Common myeloid progenitor, CD34-positive (primary cell): ENCODE measurements at regions of chr16 and their contacts with region 1.

Region 1: DNA sequence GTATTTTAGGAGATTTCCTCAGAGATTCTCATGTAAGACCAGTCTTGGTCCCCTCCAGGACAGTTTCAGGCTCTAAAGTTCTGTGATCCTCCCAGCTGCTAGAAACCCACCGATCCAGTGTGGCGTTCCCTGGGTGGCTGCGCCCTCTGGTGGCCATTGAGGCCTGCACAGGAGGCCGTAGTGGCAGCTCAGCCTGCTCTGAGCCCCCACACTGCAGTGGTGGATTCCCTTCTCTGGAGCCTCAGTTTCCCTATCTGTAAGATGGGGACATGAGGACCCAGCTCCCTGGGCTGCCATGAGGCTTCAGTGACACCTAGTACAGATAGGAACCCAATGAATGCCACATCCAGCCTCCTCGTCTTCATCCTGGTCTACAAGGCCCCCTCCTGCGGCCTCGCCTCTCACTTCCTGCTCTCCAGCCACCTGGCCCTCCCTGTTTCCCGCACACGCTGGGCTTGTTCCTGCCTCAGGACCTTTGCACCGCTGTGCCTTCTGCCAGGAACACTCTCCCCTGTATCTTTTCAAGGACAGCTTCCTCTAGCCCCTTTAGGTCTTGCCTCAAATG is 16.5 kb downstream of the CCDC102A start:
- DNase-seq: peak; percentile 72 to 85 (median 83)
- H3K4me3 ChIP-seq: no peak overlapping the region
- H3K27ac ChIP-seq: no peak overlapping the region
- H3K4me1 ChIP-seq: peaks cover 0 to 9% (median 7%) of the 10 kb centered on the region in 4 experiments
- H3K27me3 ChIP-seq: no peaks in the 10 kb centered on the region

Region 2: DNA sequence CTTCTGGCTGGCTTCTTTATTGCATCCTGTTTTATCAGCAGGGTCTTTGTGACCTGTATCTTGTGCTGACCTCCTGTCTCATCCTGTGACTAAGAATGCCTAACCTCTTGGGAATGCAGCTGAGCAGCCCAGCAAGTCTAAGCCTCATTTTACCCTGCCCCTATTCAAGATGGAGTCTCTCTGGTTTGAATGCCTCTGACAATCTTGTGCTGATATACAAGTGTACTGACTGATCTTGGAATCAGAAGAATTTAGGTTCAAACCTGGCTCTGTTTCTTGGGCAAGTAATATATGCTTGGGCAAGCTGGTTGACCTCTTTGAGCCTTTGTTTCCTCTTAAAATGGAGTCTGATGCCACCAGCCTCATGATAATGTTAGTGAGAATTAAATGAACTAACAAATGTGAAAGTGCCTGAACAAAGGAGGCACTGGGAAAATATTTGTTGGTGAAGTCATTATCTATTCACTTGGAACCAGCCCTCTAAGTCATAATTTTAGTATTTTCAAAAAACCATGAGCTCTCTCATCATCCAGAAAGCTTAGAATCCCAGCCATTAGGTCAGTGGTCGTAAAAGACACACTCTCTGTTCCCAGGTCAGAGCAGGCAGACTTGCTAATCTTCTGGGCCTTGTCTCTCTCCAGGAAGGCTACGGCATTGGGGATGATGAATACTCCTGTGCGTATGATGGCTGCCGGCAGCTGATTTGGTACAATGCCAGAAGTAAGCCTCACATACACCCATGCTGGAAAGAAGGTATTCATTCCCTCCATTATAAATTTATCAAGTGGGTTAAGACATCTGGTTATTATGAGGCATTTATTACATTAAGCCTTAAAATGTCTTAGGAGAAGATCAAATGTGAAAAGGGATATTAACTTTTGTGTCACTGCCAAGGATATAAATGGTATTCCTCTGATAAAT is 292.9 kb before region 1 on chr16:
- CTCF ChIA-PET with region 1: no interaction called
- POLR2A ChIA-PET with region 1: no interaction called
- DNase-seq: no peak
- H3K4me3 ChIP-seq: no peak overlapping the region
- H3K27ac ChIP-seq: peak overlapping the region in 1 of 2 experiments; percentile 0
- H3K4me1 ChIP-seq: no peaks in the 10 kb centered on the region
- H3K27me3 ChIP-seq: no peaks in the 10 kb centered on the region

Region 3: DNA sequence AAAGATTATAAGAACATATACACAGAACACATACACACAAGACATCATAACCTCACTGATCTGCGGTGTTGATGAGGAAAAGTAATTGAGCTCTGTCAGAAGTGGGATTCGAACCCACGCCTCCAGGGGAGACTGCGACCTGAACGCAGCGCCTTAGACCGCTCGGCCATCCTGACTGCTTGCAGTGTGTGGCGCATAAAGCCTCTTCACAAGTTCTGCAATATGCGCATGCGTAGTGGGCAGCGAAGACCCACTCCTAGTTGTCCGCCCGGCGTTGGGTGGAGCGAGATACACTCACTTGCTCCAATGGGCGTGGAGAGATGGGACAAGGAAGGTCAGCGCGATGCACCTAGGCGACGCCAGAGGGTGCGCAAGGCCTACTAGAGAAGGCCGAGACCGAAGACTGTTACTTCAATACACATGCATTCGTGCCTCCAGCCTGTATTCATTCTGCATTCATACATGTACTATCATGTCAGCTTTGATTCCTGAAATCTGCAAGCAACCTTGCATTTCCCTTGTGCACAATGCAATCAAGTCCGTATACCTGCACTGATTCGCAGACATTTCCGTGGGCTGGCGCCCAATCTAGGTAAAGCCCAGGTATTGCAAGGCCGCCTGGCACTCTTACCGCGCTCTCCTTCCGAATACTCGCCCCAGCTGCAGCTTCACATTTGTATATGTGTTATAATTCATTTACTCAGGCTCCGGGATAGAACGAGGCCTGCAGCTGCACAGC is 219.3 kb before region 1 on chr16:
- CTCF ChIA-PET with region 1: interaction called, 11 read pairs
- POLR2A ChIA-PET with region 1: no interaction called
- DNase-seq: peak; percentile 99 to 100 (median 99)
- H3K4me3 ChIP-seq: peak overlapping the region in 6 of 7 experiments; percentile 72 to 85 (median 80)
- H3K27ac ChIP-seq: peak overlapping the region in 1 of 2 experiments; percentile 81
- H3K4me1 ChIP-seq: peaks cover 3 to 20% (median 16%) of the 10 kb centered on the region in 4 experiments
- H3K27me3 ChIP-seq: peaks cover 0 to 6% (median 0%) of the 10 kb centered on the region in 5 experiments

Region 4: DNA sequence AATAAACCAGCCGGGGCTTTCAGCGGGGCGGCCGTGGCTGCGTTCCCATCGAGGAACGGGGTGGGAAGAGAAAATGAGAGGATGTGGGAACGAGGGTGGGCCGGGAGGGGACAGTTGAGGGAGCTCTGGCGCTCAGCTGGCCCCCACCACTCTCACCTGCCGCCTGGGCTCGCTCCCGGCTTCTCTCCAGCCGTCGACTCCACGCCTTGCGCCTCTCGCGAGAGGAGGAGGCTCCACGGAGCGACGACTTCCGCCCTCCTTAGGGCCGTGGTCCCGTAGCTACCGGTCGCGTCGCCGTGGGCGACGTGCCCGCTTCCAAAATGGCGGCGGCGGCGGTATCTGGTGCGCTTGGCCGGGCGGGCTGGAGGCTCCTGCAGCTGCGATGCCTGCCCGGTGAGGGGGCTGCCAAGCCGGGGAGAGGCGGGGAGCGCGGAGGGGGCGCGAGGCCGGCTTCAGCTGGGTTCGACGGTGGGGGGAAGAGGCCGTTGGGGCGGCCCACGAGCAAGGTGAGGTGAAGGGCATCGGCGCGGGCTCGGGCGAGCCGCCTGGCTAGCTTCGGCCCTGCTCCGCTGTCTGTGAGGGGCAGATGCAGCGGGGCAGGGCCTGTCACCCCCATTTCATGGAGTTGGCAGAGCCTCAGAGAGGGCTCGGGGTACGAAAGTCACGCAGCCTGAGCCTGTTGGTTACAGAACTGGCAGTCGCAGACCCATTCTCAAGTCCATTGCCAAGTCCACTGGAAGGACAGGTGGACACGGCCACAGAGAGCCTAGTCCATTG is 72.5 kb before region 1 on chr16 and contains the starts of genes CIAPIN1 and COQ9:
- CTCF ChIA-PET with region 1: interaction called, 16 read pairs
- POLR2A ChIA-PET with region 1: no interaction called
- DNase-seq: peak; percentile 93 to 95 (median 95)
- H3K4me3 ChIP-seq: peak within 1 kb of the TSS; percentile 77 to 98 (median 93)
- H3K27ac ChIP-seq: peak within 1 kb of the TSS; percentile 85 to 92
- H3K4me1 ChIP-seq: peaks cover 8 to 19% (median 18%) of the 10 kb centered on the region in 4 experiments
- H3K27me3 ChIP-seq: no peaks in the 10 kb centered on the region

Region 5: GRCh38 chr16:57475711-57476339 is 44.1 kb before region 1 on chr16:
- CTCF ChIA-PET with region 1: interaction called, 134 read pairs
- POLR2A ChIA-PET with region 1: no interaction called
- DNase-seq: peak; percentile 96 to 99 (median 98)
- H3K4me3 ChIP-seq: peak overlapping the region in 2 of 7 experiments; percentile 20 to 49
- H3K27ac ChIP-seq: no peak overlapping the region
- H3K4me1 ChIP-seq: peaks cover 0 to 77% (median 75%) of the 10 kb centered on the region in 4 experiments
- H3K27me3 ChIP-seq: no peaks in the 10 kb centered on the region

Region 6: GRCh38 chr16:57544119-57544653 is 24.3 kb after region 1 on chr16:
- CTCF ChIA-PET with region 1: interaction called, 15 read pairs
- POLR2A ChIA-PET with region 1: interaction called, 3 read pairs
- DNase-seq: peak; percentile 96 to 98 (median 98)
- H3K4me3 ChIP-seq: peak overlapping the region in 3 of 7 experiments; percentile 14 to 78 (median 61)
- H3K27ac ChIP-seq: peak overlapping the region; percentile 29 to 58
- H3K4me1 ChIP-seq: peaks cover 20 to 74% (median 61%) of the 10 kb centered on the region in 4 experiments
- H3K27me3 ChIP-seq: no peaks in the 10 kb centered on the region

Region 7: DNA sequence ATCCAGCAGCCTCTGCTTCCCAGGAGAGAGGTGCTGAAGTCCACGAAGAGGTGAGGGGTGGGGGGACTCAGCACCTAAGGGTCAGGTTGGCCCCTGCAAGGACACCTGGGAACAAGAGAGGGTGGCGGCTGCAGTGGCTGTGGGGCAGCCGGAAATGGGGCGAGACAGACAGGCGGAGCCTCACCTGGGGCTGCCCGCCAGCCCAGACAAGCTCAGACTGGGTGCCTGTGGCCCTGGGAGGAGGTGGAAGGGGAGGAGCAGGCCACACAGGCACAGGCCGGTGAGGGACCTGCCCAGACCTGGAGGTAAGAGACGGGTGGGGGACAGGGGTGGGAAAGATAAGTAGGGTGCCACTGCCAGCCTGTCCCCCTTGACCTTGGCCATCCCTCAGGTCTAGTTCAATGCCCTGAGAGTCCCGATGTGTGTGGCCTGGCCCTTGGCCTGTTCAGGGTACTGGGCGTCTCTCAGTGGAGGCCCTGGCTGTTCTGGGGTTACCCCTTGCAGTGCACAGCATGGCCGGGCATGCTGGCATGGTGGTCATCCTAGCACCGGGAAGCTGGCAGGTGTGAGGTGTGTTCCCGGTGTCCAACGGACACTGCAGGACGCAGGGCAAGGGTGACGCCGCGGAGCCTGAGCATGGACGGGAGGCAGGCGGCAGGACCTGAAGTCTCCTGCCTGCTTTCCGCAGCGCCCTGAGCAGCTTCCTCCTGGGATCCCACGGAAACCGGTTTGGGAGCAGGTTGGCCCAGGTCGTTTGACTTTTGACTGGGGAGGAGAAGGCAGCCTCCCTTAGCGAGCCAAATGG is 100.2 kb after region 1 on chr16:
- CTCF ChIA-PET with region 1: no interaction called
- POLR2A ChIA-PET with region 1: no interaction called
- DNase-seq: no peak
- H3K4me3 ChIP-seq: no peak overlapping the region
- H3K27ac ChIP-seq: no peak overlapping the region
- H3K4me1 ChIP-seq: peaks cover 0 to 22% (median 14%) of the 10 kb centered on the region in 4 experiments
- H3K27me3 ChIP-seq: no peaks in the 10 kb centered on the region